H1 (cell line): ENCODE measurements at regions of chr15 and their contacts with region 1.

Region 1: DNA sequence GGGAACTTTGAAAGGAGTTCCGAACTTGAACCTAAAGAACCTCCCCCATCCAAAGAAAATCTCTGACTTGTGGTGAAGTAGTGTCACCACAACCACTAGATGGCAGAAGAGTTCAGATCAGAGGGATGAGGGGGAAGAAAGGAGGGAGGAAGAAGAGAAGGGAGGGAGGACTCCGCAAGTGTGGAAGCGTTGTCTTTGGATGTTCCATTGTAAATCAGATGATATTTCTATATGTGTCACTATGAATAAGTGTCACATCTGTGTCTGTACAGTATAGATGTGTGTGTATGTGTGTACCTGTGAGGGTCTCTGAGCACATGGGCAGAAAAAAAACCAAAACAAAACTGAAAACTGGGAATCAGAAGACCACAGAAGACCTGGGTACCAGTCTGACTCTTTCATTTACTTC is 16.9 kb downstream of the SLC24A1 start:
- DNase-seq: no peak
- H3K4me3 ChIP-seq: no peak overlapping the region
- H3K27ac ChIP-seq: no peak overlapping the region
- H3K4me1 ChIP-seq: peaks cover 0 to 3% (median 0%) of the 10 kb centered on the region in 4 experiments; a peak in 1 of 7 replicates
- H3K27me3 ChIP-seq: no peaks in the 10 kb centered on the region; a peak in 1 of 7 replicates
- CTCF ChIP-seq: peak; percentile 21 to 90 (median 80)
- EP300 ChIP-seq: no peak
- POLR2A ChIP-seq: no peak
- RAD21 ChIP-seq: peak; percentile 85 to 91

Region 2: DNA sequence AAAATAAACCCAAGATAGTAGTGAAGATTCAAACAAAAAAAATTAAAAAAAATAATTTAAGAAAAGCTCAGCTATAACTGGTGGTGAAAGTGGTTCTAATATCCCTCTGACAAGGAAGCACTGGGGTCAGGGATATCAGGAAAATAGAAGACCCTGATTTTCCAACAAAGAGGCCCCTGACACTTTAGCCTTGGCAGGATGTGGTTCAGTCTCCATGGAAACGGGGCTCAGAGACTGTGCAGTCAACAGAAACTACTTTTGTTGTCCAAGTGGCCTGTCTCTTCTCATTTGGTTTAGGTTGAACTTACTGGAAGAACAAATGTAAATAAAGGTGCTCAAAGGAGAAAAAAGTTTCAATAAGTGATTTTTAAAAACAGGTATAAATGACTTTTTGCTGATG is 55.0 kb before region 1 on chr15:
- CTCF ChIA-PET with region 1: no interaction called
- POLR2A ChIA-PET with region 1: no interaction called
- DNase-seq: no peak
- H3K4me3 ChIP-seq: no peak overlapping the region
- H3K27ac ChIP-seq: no peak overlapping the region
- H3K4me1 ChIP-seq: no peaks in the 10 kb centered on the region
- H3K27me3 ChIP-seq: no peaks in the 10 kb centered on the region
- CTCF ChIP-seq: no peak
- EP300 ChIP-seq: no peak
- POLR2A ChIP-seq: no peak
- RAD21 ChIP-seq: no peak

Region 3: GRCh38 chr15:65655026-65655425 is 16.3 kb after region 1 on chr15:
- CTCF ChIA-PET with region 1: interaction called, 81 read pairs
- POLR2A ChIA-PET with region 1: no interaction called
- DNase-seq: no peak
- H3K4me3 ChIP-seq: no peak overlapping the region
- H3K27ac ChIP-seq: no peak overlapping the region
- H3K4me1 ChIP-seq: no peaks in the 10 kb centered on the region; a peak in 1 of 7 replicates
- H3K27me3 ChIP-seq: no peaks in the 10 kb centered on the region
- CTCF ChIP-seq: no peak
- EP300 ChIP-seq: no peak
- POLR2A ChIP-seq: no peak
- RAD21 ChIP-seq: no peak

Region 4: DNA sequence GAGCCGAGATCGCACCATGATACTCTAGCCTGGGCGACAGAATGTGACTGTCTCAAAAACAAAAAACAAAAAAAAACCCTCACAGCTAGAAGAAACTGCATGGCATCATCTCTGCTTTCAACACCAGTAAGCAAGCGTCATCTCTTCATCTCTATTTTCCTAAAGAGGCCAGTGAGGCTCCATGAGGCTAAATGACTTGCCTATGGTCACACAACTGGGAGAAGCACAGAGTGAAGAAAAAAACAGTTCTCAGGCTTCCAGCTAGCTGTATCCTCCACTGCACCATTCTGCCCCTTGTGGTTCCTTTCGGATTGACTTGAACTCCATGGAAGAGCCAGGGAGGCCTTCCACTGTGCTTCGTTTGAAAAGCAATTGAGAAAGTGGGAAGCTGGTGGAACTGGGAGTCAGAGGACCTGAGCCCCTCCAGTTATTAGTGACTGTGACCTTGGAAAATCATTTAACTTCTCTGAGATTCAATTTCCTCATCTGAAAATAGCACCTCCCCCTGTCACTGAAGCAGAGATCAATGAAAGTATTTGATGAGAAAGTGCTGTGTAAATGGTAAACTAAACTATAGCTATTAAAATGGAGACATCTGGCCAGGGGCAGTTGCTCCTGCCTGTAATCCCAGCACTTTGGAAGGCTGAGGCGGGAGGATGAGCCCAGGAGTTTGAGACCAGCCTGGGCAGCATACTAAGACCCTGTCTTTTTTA is 185.5 kb after region 1 on chr15:
- CTCF ChIA-PET with region 1: interaction called, 28 read pairs
- POLR2A ChIA-PET with region 1: no interaction called
- DNase-seq: peak in 1 of 2 experiments; percentile 70
- H3K4me3 ChIP-seq: no peak overlapping the region
- H3K27ac ChIP-seq: no peak overlapping the region
- H3K4me1 ChIP-seq: peaks cover 0 to 6% (median 2%) of the 10 kb centered on the region in 4 experiments; a peak in 4 of 7 replicates
- H3K27me3 ChIP-seq: no peaks in the 10 kb centered on the region
- CTCF ChIP-seq: peak; percentile 42 to 89 (median 68)
- EP300 ChIP-seq: no peak
- POLR2A ChIP-seq: no peak
- RAD21 ChIP-seq: peak; percentile 59 to 74

Region 5: DNA sequence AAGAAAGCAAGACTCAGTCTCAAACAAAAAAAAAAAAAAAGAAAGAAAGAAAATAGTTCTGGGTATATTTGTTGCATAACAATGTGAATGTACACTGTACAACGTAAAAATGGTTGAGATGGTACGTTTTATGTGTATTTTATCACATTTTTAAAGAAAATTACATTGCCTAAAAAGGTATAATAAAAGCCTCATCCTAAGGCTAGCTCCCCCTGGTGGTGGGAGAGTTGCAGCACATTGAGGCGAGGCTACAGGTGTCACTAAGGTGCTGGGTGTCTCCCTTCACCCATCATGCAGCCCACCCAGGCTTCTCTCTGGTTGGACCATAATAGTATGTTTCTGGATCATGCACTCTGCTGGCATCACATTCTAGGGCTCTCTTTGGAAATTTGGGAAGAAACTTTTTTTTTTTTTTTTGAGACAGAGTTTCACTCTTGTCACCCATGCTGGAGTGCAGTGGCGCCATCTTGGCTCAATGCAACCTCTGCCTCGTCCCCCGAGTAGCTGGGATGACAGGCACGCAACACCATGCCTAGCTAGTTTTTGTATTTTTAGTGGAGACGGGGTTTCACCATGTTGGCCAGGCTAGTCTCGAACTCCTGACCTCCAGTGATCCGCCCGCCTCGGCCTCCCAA is 218.3 kb after region 1 on chr15:
- CTCF ChIA-PET with region 1: interaction called, 23 read pairs
- POLR2A ChIA-PET with region 1: interaction called, 3 read pairs
- DNase-seq: peak in 1 of 2 experiments; percentile 83
- H3K4me3 ChIP-seq: no peak overlapping the region
- H3K27ac ChIP-seq: no peak overlapping the region
- H3K4me1 ChIP-seq: no peaks in the 10 kb centered on the region
- H3K27me3 ChIP-seq: no peaks in the 10 kb centered on the region
- CTCF ChIP-seq: peak; percentile 72 to 90 (median 89)
- EP300 ChIP-seq: no peak
- POLR2A ChIP-seq: no peak
- RAD21 ChIP-seq: peak; percentile 48 to 57

Region 6: DNA sequence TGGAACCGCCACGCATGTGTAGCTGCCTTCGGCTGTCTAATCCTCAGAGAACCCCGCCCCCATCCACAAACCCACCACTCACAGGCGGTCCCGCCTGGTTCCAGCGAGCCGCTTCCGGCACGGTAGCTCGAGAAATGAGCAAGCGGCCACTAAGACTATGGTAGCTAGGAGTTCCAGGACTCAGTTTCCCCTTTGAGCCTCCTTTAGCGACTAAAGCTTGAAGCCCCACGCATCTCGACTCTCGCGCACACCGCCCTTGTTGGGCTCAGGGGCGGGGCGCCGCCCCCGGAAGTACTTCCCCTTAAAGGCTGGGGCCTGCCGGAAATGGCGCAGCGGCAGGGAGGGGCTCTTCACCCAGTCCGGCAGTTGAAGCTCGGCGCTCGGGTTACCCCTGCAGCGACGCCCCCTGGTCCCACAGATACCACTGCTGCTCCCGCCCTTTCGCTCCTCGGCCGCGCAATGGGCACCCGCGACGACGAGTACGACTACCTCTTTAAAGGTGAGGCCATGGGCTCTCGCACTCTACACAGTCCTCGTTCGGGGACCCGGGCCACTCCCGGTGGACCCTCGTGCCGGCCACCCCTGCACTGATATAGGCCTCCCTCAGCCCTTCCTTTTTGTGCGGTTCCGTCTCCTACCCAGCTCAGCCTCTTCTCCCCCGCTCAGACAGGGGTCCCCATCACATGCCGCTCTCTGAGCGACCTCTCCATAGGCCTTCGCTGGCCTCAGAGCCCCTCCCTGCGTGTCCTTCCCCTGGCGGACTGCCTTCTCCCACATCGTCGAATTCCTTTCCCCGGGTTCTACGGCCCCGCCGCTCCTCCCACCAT is 230.7 kb after region 1 on chr15 and contains the start of gene RAB11A:
- CTCF ChIA-PET with region 1: interaction called, 3 read pairs
- POLR2A ChIA-PET with region 1: interaction called, 10 read pairs
- DNase-seq: peak; percentile 90 to 97
- H3K4me3 ChIP-seq: peak within 1 kb of the TSS; percentile 85 to 99 (median 92)
- H3K27ac ChIP-seq: peak within 1 kb of the TSS; percentile 92
- H3K4me1 ChIP-seq: peaks cover 0 to 2% (median 0%) of the 10 kb centered on the region in 4 experiments; a peak in 2 of 7 replicates
- H3K27me3 ChIP-seq: no peaks in the 10 kb centered on the region
- CTCF ChIP-seq: peak; percentile 28 to 31 (median 30); a peak in 3 of 4 replicates
- EP300 ChIP-seq: no peak
- POLR2A ChIP-seq: peak; percentile 95 to 99
- RAD21 ChIP-seq: peak; percentile 16 to 17; a peak in 1 of 4 replicates
- total RNA-seq, gene RAB11A: 247 and 254 TPM in 2 replicates